ENCODE measurements at regions of chr16 and their contacts with region 1.

Region 1: DNA sequence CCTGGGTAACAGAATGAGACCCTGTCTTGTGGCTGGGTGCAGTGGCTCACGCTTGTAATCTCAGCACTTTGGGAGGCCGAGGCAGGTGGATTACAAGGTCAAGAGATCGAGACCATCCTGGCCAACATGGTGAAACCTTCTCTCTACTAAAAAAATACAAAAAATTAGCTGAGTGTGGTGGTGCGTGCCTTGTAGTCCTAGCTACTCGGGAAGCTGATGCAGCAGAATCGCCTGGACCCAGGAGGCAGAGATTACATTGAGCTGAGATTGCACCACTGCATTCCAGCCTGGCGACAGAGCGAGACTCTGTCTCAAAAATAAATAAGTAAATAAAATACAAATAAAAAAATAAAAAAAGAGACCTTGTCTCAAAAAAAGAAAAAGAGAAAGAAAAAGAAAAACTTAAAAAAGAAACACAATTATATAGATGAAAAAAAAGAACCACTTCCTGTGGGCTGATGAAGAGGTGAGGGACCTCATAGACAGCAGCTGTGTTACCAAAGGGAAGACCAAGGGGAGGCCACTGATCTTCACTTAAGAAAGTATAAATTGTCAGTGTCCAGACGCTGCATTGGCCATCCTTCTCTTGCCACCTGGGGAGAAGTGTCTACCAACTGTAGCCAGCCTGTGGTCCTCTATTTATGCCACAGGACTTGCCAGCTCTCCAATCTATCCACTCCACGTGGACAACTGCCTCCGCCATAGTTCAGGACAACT is 24.4 kb upstream of the SMG1 start:
- DNase-seq: no peak
- ATAC-seq: no peak
- H3K4me3 ChIP-seq: no peak overlapping the region
- H3K27ac ChIP-seq: no peak overlapping the region
- H3K4me1 ChIP-seq: peaks cover 20% of the 10 kb centered on the region
- H3K27me3 ChIP-seq: no peaks in the 10 kb centered on the region; a peak in 1 of 5 replicates
- CTCF ChIP-seq: no peak
- EP300 ChIP-seq: no peak
- POLR2A ChIP-seq: no peak
- RAD21 ChIP-seq: no peak

Region 2: DNA sequence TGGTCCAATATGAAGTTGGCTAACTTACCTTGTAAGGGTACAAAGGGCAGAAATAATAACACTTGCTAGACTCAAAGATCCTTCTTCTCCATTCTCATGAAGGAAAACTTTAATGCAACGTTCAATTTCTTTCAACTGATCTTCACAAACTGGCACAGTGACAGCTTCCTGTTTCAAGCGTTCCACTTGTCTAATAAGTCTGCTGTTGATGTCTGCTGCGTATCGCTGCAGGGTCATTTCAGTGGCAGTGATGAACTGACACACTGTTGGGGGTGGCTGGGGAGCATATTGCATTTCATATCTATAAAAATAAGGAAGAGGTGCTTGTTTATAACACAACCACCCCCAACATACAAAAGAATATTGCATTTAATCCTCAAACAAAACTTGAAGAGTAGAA is 115.8 kb before region 1 on chr16:
- CTCF ChIA-PET with region 1: no interaction called
- POLR2A ChIA-PET with region 1: no interaction called
- in situ Hi-C with region 1: no loop called
- intact Hi-C with region 1: no loop called
- DNase-seq: no peak
- ATAC-seq: no peak
- H3K4me3 ChIP-seq: no peak overlapping the region
- H3K27ac ChIP-seq: no peak overlapping the region
- H3K4me1 ChIP-seq: peaks cover 8% of the 10 kb centered on the region; the same call in 1 of the 2 replicates
- H3K27me3 ChIP-seq: no peaks in the 10 kb centered on the region
- CTCF ChIP-seq: no peak
- EP300 ChIP-seq: no peak
- POLR2A ChIP-seq: no peak
- RAD21 ChIP-seq: no peak

Region 3: GRCh38 chr16:18932243-18932981 is 18.2 kb before region 1 on chr16:
- CTCF ChIA-PET with region 1: interaction called, 3 read pairs
- POLR2A ChIA-PET with region 1: interaction called, 9 read pairs
- in situ Hi-C with region 1: no loop called
- intact Hi-C with region 1: loop called (anchors 1 kb)
- DNase-seq: peak; percentile 46
- ATAC-seq: no peak
- H3K4me3 ChIP-seq: no peak overlapping the region
- H3K27ac ChIP-seq: no peak overlapping the region
- H3K4me1 ChIP-seq: peaks cover 61% of the 10 kb centered on the region
- H3K27me3 ChIP-seq: no peaks in the 10 kb centered on the region
- CTCF ChIP-seq: no peak
- EP300 ChIP-seq: peak in 1 of 2 experiments; percentile 52; a peak in 1 of 4 replicates
- POLR2A ChIP-seq: no peak
- RAD21 ChIP-seq: no peak